Mammary epithelial cell (primary cell): ENCODE measurements at regions of chr22 and their contacts with region 1.

Region 1: GRCh38 chr22:45994491-45995404 is 17.8 kb upstream of the WNT7B start:
- DNase-seq: peak; percentile 40
- H3K4me3 ChIP-seq: no peak overlapping the region
- H3K27ac ChIP-seq: no peak overlapping the region
- H3K4me1 ChIP-seq: peaks cover 9% of the 10 kb centered on the region
- H3K27me3 ChIP-seq: no peaks in the 10 kb centered on the region
- CTCF ChIP-seq: peak; percentile 94 to 96

Region 2: GRCh38 chr22:45918459-45919370 is 76.0 kb before region 1 on chr22:
- CTCF ChIA-PET with region 1: no interaction called
- dilution Hi-C with region 1: no loop called
- in situ Hi-C with region 1: no loop called
- intact Hi-C with region 1: no loop called
- DNase-seq: peak; percentile 46
- H3K4me3 ChIP-seq: no peak overlapping the region
- H3K27ac ChIP-seq: no peak overlapping the region
- H3K4me1 ChIP-seq: peaks cover 16% of the 10 kb centered on the region
- H3K27me3 ChIP-seq: no peaks in the 10 kb centered on the region
- CTCF ChIP-seq: no peak

Region 3: GRCh38 chr22:46116491-46116958 is 121.8 kb after region 1 on chr22:
- CTCF ChIA-PET with region 1: no interaction called
- dilution Hi-C with region 1: no loop called
- in situ Hi-C with region 1: no loop called
- intact Hi-C with region 1: loop called (anchors 1 kb)
- DNase-seq: peak; percentile 63
- H3K4me3 ChIP-seq: no peak overlapping the region
- H3K27ac ChIP-seq: no peak overlapping the region
- H3K4me1 ChIP-seq: peaks cover 30% of the 10 kb centered on the region
- H3K27me3 ChIP-seq: no peaks in the 10 kb centered on the region
- CTCF ChIP-seq: peak; percentile 29 to 83

Region 4: DNA sequence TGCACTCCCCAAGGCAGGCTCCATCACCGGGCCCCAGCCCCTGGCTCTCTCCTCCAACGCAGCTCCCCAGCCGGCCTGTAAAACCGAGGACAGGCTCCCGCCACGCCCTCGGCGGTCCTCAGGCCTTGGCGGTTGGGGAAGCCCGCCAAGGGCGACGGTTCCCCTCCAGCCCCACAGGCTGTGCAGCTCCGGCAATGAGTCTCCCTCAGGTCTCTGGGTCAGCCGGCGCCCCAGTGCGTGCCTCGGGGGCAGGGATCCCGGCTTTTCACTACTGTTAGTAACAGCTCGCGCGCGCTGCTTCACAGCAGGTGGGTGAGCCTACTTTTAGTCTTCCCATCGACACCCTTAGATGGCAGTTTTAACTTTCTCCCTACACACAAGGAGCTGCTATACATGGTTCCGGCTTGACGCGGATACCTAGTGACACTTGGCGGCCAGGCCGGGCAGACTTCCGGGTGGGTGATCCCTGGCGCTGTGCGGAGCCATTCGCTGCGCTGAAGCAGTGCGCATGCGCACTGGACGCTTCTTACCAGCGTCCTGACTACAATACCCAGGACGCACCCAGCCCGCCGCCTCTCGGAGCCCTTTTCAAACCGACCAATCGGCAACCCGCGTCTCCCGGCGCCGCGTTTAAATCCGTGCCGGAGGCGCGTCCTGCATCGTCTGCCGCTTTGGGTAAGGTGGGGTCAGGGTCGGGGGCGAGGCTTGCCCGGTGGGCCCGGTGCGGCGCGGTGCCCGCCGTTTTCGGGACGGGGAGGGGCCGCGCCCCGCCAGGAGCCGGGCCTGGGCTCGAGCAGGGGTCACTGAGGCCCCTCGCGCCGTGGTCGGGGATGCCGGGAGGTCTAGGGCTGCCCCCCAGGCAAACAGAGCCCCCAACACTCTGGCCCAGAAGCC is 301.8 kb after region 1 on chr22 and contains the start of gene GTSE1:
- CTCF ChIA-PET with region 1: no interaction called
- dilution Hi-C with region 1: no loop called
- in situ Hi-C with region 1: no loop called
- intact Hi-C with region 1: loop called (anchors 5 kb)
- DNase-seq: peak; percentile 95
- H3K4me3 ChIP-seq: peak within 1 kb of the TSS; percentile 56 to 72 (median 72)
- H3K27ac ChIP-seq: peak within 1 kb of the TSS; percentile 53
- H3K4me1 ChIP-seq: peaks cover 15% of the 10 kb centered on the region
- H3K27me3 ChIP-seq: no peaks in the 10 kb centered on the region
- CTCF ChIP-seq: peak in 1 of 2 donors; percentile 28
- total RNA-seq, gene GTSE1: 0.67 to 22.3 TPM

Region 5: DNA sequence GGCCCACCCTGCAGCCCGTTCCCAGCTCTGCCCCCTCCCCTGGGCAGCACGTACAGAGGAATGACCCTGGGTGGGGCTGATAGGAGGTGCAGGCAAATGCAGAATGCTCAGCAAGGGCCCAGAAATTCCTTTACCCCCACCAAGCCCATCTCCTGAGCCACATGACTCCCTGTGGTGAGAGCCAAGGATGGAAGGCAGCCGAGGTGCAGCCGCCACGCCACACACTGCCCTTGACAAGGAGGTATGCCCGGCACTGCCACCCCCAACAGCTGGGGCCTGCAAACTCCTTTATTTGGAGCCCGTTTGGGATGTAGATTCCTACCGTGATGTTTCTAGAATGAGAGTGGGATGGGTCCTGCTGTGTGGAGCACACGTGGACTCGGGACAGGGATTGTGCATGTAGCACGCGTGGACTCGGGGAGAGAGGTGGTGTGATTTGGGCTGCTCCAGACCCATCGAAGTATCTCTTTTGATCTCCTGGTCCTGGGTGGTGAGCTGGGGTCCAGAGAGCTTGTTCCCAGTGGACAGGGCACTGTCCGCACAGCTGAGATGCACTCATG is 314.9 kb after region 1 on chr22:
- CTCF ChIA-PET with region 1: no interaction called
- dilution Hi-C with region 1: no loop called
- in situ Hi-C with region 1: loop called (anchors 5 to 10 kb)
- intact Hi-C with region 1: loop called (anchors 2 kb)
- DNase-seq: no peak
- H3K4me3 ChIP-seq: no peak overlapping the region
- H3K27ac ChIP-seq: no peak overlapping the region
- H3K4me1 ChIP-seq: peaks cover 5% of the 10 kb centered on the region
- H3K27me3 ChIP-seq: no peaks in the 10 kb centered on the region
- CTCF ChIP-seq: no peak

Region 6: DNA sequence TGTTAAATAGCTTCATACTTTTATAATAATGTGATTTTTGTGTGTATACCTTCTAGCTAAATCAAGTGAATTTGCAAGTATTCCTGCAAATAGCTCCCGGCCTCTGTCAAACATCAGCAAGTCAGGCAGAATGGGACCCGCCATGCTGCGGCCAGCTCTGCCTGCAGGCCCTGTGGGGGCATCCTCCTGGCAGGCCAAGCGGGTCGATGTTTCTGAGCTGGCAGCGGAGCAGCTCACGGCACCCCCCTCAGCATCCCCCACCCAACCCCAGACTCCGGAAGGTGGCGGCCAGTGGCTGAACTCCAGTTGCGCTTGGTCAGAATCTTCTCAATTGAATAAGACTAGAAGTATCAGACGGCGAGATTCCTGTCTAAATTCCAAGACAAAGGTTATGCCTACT is 321.2 kb after region 1 on chr22:
- CTCF ChIA-PET with region 1: no interaction called
- dilution Hi-C with region 1: no loop called
- in situ Hi-C with region 1: loop called (anchors 5 to 10 kb)
- intact Hi-C with region 1: loop called (anchors 2 kb)
- DNase-seq: no peak
- H3K4me3 ChIP-seq: no peak overlapping the region
- H3K27ac ChIP-seq: no peak overlapping the region
- H3K4me1 ChIP-seq: no peaks in the 10 kb centered on the region
- H3K27me3 ChIP-seq: no peaks in the 10 kb centered on the region
- CTCF ChIP-seq: no peak